ENCODE measurements at regions of chr4 and their contacts with region 1.

Region 1: DNA sequence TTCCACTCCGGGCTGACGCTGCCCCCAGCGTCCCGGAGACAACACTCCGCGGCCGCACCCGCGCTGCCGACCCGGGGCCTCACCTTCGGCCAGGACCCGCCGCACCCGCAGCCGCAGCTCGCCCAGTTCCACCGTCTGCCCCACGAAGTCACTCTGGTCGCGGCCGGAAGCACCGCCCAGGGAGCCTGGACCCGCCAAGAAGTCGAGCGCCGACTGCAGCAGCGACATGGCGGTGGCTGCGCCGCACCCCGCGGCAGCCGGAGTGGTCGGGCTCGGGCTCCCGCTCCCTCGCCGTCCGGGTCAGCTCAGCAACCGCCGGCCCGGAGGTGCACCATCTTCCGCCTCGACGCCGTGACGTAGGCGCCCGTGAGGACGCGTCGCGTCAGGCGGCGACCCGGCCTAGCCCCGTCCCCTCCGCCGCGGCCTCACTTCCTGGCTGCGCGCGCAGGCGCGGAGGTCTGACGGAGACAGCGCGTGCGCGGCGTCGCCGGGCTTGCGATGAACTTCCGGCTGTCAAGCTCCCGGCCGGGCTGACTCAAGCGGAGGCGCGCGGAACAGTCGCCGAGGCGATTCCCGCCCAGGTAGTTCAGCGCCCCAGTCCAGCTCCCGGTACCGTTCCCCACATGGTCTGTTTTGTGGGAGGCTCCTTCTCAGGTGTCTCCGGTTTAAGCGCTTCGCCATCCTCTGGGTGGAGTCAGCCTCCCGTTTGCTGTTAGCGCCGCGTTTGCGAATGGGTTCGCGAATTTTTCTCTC is at the starts of genes GAK and TMEM175:
- DNase-seq: peak; percentile 83 to 98 (median 92)
- H3K4me3 ChIP-seq: peak within 1 kb of the TSS; percentile 71 to 100 (median 99)
- H3K27ac ChIP-seq: peak within 1 kb of the TSS in 56 of 59 donors; percentile 5 to 93 (median 82)
- H3K27me3 ChIP-seq: no peaks in the 10 kb centered on the region
- CTCF ChIP-seq: peak in 38 of 56 donors; percentile 15 to 62 (median 33)
- total RNA-seq, gene GAK: 72.0 to 173 (median 115) TPM
- total RNA-seq, gene TMEM175: 25.9 to 119 (median 61.7) TPM

Region 2: DNA sequence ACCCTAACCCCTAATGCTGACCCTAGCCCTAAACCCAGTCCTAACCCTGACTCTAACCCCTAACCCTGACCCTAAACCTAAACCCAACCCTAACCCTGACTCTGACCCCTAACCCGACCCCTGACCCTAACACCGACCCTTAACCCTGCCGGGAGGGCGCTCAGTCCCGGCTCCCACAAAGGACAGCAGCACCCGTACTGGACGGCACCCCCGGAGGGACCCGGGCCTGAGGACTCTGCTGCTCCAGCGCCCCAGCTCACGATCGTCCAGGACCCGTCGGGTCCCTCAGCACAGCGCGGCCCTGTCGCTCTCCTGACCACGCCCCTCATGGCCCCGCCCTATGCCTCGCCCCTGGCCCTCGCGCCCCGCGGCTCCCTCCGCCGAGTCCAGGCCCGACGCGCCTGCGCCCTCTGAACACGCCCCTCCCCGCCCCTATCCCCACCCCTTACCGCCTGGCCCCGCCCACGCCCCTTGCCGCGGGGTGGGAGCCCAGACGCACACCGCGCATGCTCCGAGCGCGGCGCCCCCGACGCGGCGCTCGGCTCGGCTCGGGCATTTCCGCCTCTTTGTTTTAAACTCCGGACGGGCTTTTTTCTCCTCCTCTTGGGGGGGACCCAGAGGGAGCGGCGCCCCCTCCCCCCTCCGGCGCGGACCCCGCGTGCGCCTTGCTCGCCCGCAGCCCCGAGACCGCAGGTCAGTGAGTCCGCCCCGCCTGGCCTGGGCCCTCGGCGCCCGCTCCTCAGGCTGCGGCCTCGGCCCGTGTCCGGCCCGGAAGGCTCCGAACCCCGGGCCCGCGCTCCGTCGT is 226.7 kb before region 1 on chr4 and contains the start of gene PCGF3:
- intact Hi-C with region 1: loop called in 1 of 2 experiments (anchors 10 kb)
- DNase-seq: peak; percentile 83 to 96 (median 92)
- H3K4me3 ChIP-seq: peak within 1 kb of the TSS; percentile 53 to 100 (median 92)
- H3K27ac ChIP-seq: peak within 1 kb of the TSS in 46 of 59 donors; percentile 7 to 88 (median 68)
- H3K27me3 ChIP-seq: no peaks in the 10 kb centered on the region
- CTCF ChIP-seq: peak in 17 of 56 donors; percentile 9 to 44 (median 25)
- total RNA-seq, gene PCGF3: 32.0 to 54.7 (median 45.0) TPM

Region 3: GRCh38 chr4:781493-782216 is 150.5 kb before region 1 on chr4:
- intact Hi-C with region 1: loop called (anchors 2 to 5 kb)
- DNase-seq: peak; percentile 96 to 100 (median 99)
- H3K4me3 ChIP-seq: peak overlapping the region; percentile 74 to 100 (median 99)
- H3K27ac ChIP-seq: peak overlapping the region; percentile 73 to 99 (median 95)
- H3K27me3 ChIP-seq: peaks cover 0 to 25% (median 13%) of the 10 kb centered on the region in 45 donors
- CTCF ChIP-seq: peak in 13 of 56 donors; percentile 2 to 39 (median 12)

Region 4: DNA sequence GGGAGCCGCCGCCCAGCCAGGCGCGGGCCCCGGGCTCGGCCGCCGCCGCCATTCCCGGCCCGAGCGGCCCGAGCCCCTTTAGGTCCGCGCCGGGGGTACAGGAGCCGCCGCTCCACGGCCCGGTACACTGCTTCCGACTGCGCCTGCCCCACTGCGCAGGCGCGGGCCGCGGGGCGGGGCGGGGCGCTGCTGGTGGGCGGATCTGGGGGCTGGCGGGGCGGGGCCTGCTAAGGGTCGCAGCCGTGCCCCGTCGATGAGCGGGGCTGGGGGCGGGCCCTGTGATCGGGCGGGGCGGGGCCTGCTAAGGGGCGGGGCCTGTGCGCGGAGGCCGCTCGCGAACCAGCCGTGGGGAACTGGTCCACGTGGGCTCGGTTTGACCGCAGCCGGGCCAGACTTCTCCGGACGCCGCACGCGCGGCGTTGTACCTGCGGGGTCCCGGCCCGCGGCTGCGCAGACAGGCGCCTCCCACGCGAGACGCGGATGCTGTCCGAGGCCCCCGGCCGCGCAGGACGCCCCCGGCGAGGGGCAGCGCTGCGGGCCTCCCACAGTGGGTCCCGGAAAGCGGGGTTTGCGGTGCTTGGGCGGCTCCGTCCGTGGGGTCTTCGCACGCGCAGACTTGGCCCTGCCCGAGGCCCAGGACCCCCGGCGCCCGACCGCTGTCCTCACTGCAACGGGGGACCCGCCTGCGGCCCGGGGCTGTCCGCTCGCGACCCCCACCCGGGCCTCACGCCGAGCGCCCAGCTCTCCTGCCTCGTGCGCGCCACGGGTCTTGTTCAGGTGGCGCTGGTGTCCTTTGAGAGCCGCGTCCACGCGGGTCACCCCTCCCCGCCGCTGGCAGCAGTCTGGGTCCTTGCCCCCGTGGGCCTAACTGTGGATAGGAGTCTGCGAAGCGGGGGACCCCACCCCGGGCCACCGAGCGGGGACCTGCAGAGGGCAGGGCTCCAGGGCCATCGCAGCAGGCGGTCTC is 41.6 kb after region 1 on chr4 and contains the start of gene DGKQ:
- intact Hi-C with region 1: loop called (anchors 5 kb)
- DNase-seq: peak; percentile 81 to 91 (median 86)
- H3K4me3 ChIP-seq: peak within 1 kb of the TSS; percentile 43 to 91 (median 77)
- H3K27ac ChIP-seq: peak within 1 kb of the TSS in 11 of 59 donors; percentile 2 to 68 (median 41)
- H3K27me3 ChIP-seq: no peaks in the 10 kb centered on the region
- CTCF ChIP-seq: no peak
- total RNA-seq, gene DGKQ: 13.3 to 31.8 (median 23.2) TPM

Region 5: GRCh38 chr4:986879-987623 is 54.9 kb after region 1 on chr4 and contains the start of gene IDUA:
- intact Hi-C with region 1: loop called in 1 of 2 experiments (anchors 5 kb)
- DNase-seq: peak; percentile 74 to 94 (median 88)
- H3K4me3 ChIP-seq: peak within 1 kb of the TSS; percentile 61 to 93 (median 79)
- H3K27ac ChIP-seq: peak within 1 kb of the TSS in 50 of 59 donors; percentile 2 to 88 (median 72)
- H3K27me3 ChIP-seq: no peaks in the 10 kb centered on the region
- CTCF ChIP-seq: peak in 55 of 56 donors; percentile 9 to 77 (median 54)
- total RNA-seq, gene IDUA: 25.5 to 80.1 (median 43.3) TPM

Region 6: GRCh38 chr4:1011022-1011694 is 79.0 kb after region 1 on chr4 and contains the start of gene FGFRL1:
- intact Hi-C with region 1: no loop called
- DNase-seq: peak in 6 of 10 donors; percentile 33 to 69 (median 64)
- H3K4me3 ChIP-seq: peak within 1 kb of the TSS in 58 of 59 donors; percentile 2 to 70 (median 52)
- H3K27ac ChIP-seq: peak within 1 kb of the TSS in 18 of 59 donors; percentile 2 to 95 (median 41)
- H3K27me3 ChIP-seq: peaks cover 0 to 14% (median 0%) of the 10 kb centered on the region in 45 donors
- CTCF ChIP-seq: no peak
- total RNA-seq, gene FGFRL1: 18.7 to 109 (median 38.4) TPM